PC-3 (cell line): ENCODE measurements at regions of chr16 and their contacts with region 1.

Region 1: DNA sequence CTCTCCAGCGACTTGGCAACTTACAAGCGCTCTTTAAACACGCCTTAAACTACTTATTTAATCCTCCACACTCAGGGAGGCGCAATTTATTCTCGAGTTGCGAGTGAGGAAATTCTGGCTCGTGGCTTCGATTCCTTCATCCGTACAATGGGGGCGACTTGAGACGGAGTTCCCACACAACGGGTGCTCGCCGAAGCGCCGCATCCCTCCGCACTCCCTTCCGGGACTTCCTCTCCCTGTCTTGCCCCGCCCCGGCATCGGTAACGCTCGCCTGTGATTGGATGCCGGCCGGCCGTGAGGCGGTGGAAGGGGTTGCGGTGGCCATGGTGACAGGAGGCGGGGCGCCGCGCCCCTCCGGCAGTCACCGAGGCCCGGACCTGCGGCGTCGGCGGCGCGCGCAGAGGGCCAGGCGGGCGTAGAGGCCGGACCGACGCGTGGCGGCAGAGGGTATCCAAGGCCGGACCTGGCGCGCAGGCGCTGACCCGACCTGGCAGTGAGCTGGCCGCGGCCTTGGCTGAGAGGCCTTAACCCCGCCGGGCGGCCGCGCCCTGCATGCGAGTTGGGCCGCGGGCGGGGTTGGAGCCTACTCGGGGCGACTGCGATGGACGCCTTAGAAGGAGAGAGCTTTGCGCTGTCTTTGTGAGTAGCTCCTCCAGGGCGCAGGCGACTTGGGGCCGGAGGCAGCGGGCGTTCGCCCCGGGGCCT is at the start of gene ARL2BP:
- DNase-seq: peak; percentile 95
- ATAC-seq: peak; percentile 97
- H3K4me3 ChIP-seq: peak within 1 kb of the TSS; percentile 79
- H3K27ac ChIP-seq: peak within 1 kb of the TSS; percentile 37
- H3K4me1 ChIP-seq: peaks cover 12% of the 10 kb centered on the region; the same call in 1 of the 2 replicates
- H3K27me3 ChIP-seq: no peaks in the 10 kb centered on the region
- CTCF ChIP-seq: peak; percentile 42
- total RNA-seq, gene ARL2BP: 35.3 and 38.4 TPM in 2 replicates

Region 2: GRCh38 chr16:57194512-57194911 is 50.4 kb before region 1 on chr16:
- CTCF ChIA-PET with region 1: interaction called, 13 read pairs
- POLR2A ChIA-PET with region 1: no interaction called
- intact Hi-C with region 1: loop called (anchors 5 kb)
- DNase-seq: peak; percentile 90
- ATAC-seq: peak; percentile 93
- H3K4me3 ChIP-seq: peak overlapping the region; percentile 32; the same call in 1 of the 2 replicates
- H3K27ac ChIP-seq: peak overlapping the region; percentile 87
- H3K4me1 ChIP-seq: peaks cover 56% of the 10 kb centered on the region
- H3K27me3 ChIP-seq: no peaks in the 10 kb centered on the region
- CTCF ChIP-seq: no peak

Region 3: DNA sequence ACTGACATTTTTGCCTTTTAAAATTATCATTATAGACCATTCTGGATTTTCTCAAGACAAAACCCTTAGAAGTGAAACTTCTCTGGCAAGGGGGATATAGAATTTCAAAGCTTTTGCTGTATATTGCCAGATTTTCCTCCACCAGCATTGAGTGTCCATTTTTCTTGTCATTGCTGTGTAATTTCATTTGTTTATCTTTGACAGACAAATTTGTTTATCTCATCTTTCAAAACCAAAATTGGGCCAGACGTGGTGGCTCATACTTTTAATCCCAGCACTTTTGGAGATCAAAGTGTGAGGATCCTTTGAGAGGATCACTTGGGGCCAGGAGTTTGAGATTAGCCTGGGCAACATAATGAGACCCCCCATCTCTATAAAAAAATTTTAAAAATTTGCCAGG is 15.8 kb before region 1 on chr16:
- CTCF ChIA-PET with region 1: no interaction called
- POLR2A ChIA-PET with region 1: no interaction called
- intact Hi-C with region 1: no loop called
- DNase-seq: no peak
- ATAC-seq: no peak
- H3K4me3 ChIP-seq: no peak overlapping the region
- H3K27ac ChIP-seq: no peak overlapping the region
- H3K4me1 ChIP-seq: no peaks in the 10 kb centered on the region
- H3K27me3 ChIP-seq: no peaks in the 10 kb centered on the region
- CTCF ChIP-seq: no peak

Region 4: DNA sequence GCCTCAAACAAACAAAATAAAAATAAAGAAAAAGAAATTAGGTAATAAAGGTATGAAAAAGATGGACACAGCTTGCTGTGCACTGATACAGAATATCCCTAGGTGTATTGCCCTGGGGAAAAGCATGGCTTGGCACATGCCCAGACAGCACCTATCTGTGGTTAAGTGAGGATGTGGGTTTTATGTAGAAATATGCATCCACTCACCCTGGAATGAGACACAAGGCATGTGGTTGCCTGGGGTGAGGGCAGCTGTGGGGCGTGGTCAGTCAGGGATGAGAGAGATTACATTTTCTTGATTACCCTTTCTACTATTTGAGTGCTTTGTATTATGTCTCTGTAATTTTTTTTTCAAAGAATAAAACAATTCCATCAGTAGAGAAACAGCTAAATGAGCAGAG is 32.7 kb after region 1 on chr16:
- CTCF ChIA-PET with region 1: no interaction called
- POLR2A ChIA-PET with region 1: no interaction called
- intact Hi-C with region 1: loop called (anchors 2 kb)
- DNase-seq: peak; percentile 96
- ATAC-seq: peak; percentile 85
- H3K4me3 ChIP-seq: no peak overlapping the region
- H3K27ac ChIP-seq: peak overlapping the region; percentile 51
- H3K4me1 ChIP-seq: peaks cover 38% of the 10 kb centered on the region
- H3K27me3 ChIP-seq: no peaks in the 10 kb centered on the region
- CTCF ChIP-seq: no peak

Region 5: GRCh38 chr16:57341441-57342303 is 96.8 kb after region 1 on chr16:
- CTCF ChIA-PET with region 1: no interaction called
- POLR2A ChIA-PET with region 1: no interaction called
- intact Hi-C with region 1: loop called (anchors 1 kb)
- DNase-seq: peak; percentile 99
- ATAC-seq: peak; percentile 90
- H3K4me3 ChIP-seq: no peak overlapping the region
- H3K27ac ChIP-seq: peak overlapping the region; percentile 94
- H3K4me1 ChIP-seq: peaks cover 33% of the 10 kb centered on the region
- H3K27me3 ChIP-seq: no peaks in the 10 kb centered on the region
- CTCF ChIP-seq: no peak; the same call in 1 of the 2 replicates

Region 6: GRCh38 chr16:57422026-57422944 is 177.4 kb after region 1 on chr16:
- CTCF ChIA-PET with region 1: no interaction called
- POLR2A ChIA-PET with region 1: no interaction called
- intact Hi-C with region 1: loop called (anchors 1 kb)
- DNase-seq: peak; percentile 69
- ATAC-seq: peak; percentile 55
- H3K4me3 ChIP-seq: no peak overlapping the region
- H3K27ac ChIP-seq: no peak overlapping the region
- H3K4me1 ChIP-seq: peaks cover 5% of the 10 kb centered on the region
- H3K27me3 ChIP-seq: no peaks in the 10 kb centered on the region
- CTCF ChIP-seq: peak; percentile 79